ENCODE measurements at regions of chr6 and their contacts with region 1.

Region 1: DNA sequence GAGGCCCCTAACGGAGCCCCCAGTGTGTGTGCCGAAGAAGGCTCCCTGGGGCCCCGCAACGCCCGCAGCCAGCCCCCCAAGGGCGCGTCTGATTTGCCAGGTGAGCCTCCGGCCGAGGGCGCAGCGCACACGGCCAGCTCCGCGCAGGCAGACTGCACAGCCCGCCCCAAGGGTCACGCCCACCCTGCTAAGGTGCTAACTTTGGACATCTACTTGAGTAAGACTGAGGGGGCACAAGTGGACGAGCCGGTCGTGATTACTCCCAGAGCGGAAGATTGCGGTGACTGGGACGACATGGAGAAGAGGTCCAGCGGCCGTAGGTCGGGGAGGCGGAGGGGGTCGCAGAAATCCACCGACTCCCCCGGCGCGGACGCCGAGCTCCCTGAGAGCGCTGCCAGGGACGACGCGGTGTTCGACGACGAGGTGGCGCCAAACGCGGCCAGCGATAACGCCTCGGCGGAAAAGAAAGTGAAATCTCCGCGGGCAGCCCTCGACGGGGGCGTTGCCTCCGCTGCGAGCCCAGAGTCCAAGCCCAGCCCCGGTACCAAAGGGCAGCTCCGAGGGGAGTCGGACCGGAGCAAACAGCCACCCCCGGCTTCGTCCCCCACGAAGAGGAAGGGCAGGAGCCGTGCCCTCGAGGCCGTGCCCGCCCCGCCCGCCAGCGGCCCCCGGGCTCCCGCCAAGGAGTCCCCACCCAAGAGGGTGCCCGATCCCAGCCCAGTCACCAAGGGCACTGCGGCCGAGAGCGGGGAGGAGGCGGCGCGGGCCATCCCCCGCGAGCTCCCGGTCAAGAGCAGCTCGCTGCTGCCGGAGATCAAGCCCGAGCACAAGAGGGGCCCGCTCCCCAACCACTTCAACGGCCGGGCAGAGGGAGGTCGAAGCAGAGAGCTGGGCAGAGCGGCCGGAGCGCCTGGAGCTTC is 117.0 kb downstream of the RTN4IP1 start:
- DNase-seq: peak; percentile 83
- ATAC-seq: peak; percentile 62
- H3K4me3 Mint-ChIP-seq: peak overlapping the region; percentile 90
- H3K27ac Mint-ChIP-seq: peak overlapping the region; percentile 93
- H3K4me1 Mint-ChIP-seq: peaks cover 38% of the 10 kb centered on the region
- H3K27me3 Mint-ChIP-seq: no peaks in the 10 kb centered on the region
- CTCF ChIP-seq: peak; percentile 56

Region 2: DNA sequence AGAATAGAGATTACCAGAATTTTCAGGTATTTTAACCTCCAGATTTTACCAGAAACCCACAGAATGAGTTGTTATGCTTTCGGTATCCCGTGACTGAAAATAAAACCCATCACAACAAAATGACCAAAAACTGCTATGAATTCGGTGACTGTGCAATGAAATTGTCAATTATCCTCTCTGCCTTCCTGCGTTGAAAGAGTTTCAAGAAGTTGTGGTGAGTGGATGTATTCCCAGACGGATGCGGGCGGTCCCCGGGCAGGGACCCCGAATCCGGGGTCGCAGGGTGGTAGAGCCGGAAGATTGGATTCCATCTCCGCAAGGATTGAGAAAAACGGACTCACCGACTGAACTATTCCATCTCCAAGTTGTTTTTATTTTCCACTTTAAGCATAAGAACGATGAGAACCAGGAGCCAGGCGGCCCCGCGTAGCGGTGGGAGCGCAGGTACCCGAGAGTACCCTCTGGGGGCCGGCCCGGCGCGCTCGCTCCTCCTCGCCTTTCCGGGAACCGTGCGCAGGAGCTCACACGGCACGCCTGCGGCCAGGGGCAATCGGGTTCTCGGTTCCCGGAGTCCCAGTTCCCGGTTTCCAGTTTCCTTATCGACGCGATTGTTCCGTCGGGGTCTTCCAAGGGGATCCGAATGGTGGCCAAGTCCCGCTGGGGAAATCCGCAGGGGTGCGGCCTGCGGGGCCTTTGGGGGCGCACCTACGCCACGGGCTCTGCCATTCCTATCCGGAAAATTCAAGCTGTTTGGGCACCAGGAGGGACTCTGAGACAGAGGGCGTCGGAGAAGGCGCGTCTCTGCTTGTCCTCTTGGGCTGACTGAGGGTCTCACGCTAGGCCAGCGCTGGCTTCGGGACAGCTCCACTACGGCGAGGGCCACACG is 531.1 kb before region 1 on chr6:
- CTCF ChIA-PET with region 1: no interaction called
- POLR2A ChIA-PET with region 1: no interaction called
- intact Hi-C with region 1: no loop called
- DNase-seq: peak; percentile 45
- ATAC-seq: peak; percentile 47
- H3K4me3 Mint-ChIP-seq: peak overlapping the region; percentile 66
- H3K27ac Mint-ChIP-seq: peak overlapping the region; percentile 67
- H3K4me1 Mint-ChIP-seq: peaks cover 38% of the 10 kb centered on the region
- H3K27me3 Mint-ChIP-seq: peaks cover 57% of the 10 kb centered on the region
- CTCF ChIP-seq: no peak

Region 3: GRCh38 chr6:106525111-106525881 is 13.0 kb after region 1 on chr6:
- CTCF ChIA-PET with region 1: interaction called, 80 read pairs
- POLR2A ChIA-PET with region 1: interaction called, 70 read pairs
- intact Hi-C with region 1: no loop called
- DNase-seq: no peak
- ATAC-seq: peak; percentile 31
- H3K4me3 Mint-ChIP-seq: peak overlapping the region; percentile 77
- H3K27ac Mint-ChIP-seq: peak overlapping the region; percentile 90
- H3K4me1 Mint-ChIP-seq: peaks cover 70% of the 10 kb centered on the region
- H3K27me3 Mint-ChIP-seq: no peaks in the 10 kb centered on the region
- CTCF ChIP-seq: no peak

Region 4: DNA sequence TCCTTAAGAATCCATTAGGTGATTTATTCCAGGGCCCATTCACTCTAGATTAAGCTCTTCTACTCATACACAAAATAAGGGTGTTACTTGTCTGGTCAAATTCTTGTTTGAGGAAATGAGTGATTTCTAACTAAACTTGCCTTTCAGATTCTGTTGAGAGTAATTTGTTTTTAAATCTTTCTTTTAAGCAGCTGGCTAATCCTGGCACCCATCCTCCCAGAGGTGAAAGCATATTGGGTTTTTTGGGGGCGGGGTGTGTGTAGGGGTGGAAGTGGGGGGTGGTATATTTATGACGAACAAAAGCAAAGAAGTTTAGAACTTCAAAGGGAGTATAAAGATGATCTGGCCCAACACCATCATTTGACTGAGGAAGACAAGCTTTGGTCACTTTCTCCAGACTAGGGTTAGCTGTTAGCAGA is 22.3 kb after region 1 on chr6:
- CTCF ChIA-PET with region 1: interaction called, 27 read pairs
- POLR2A ChIA-PET with region 1: interaction called, 20 read pairs
- intact Hi-C with region 1: no loop called
- DNase-seq: peak; percentile 77
- ATAC-seq: peak; percentile 84
- H3K4me3 Mint-ChIP-seq: no peak overlapping the region
- H3K27ac Mint-ChIP-seq: peak overlapping the region; percentile 84
- H3K4me1 Mint-ChIP-seq: peaks cover 78% of the 10 kb centered on the region
- H3K27me3 Mint-ChIP-seq: no peaks in the 10 kb centered on the region
- CTCF ChIP-seq: no peak

Region 5: DNA sequence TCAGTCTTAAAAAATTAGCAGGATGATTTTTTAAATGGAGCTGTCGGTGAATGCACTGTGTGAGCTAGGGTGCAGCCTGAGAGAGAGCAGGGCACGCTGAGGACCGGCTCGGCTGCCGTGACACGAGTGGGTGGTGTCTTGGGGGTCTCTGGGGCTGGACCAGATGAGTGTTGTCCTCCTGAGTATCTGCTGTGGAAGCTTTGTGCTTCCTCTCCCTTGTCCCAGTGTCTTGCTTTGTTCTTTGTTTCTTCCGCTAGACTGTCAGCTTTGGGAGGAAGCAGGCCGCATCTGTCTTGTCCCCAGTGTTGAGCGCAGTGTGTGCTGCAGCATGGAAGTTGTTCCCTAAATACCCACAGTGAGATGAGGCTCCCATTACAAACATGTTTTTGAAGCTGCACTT is 27.6 kb after region 1 on chr6:
- CTCF ChIA-PET with region 1: interaction called, 27 read pairs
- POLR2A ChIA-PET with region 1: interaction called, 20 read pairs
- intact Hi-C with region 1: no loop called
- DNase-seq: no peak
- ATAC-seq: no peak
- H3K4me3 Mint-ChIP-seq: no peak overlapping the region
- H3K27ac Mint-ChIP-seq: no peak overlapping the region
- H3K4me1 Mint-ChIP-seq: peaks cover 36% of the 10 kb centered on the region
- H3K27me3 Mint-ChIP-seq: no peaks in the 10 kb centered on the region
- CTCF ChIP-seq: no peak

Region 6: DNA sequence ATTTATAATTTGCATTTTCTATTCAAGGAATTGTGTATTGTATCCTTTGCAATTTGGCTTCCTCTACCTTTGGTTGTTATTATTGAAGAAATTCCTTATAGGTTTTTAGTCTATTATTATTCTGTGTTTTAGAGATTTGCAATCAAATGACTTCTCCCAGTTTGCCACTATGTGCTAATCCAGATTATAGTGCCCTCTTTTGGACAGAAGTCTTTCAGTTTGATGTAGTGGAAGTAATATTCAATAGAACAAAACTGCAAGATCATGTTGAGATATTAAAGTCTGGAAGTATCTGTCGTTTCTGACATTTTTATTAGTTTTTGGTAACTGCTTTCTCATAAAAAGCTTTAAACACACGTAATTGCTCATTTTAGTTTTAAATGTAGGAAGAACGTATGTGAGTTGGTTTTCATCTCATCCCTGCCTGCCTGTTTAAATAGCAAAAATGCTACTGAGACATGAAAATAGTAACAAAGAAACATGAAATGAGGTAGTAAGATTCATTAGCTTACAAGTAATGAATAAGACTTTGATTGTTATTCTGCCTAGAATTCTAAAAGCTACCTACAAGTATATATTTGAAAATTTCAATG is 44.2 kb after region 1 on chr6:
- CTCF ChIA-PET with region 1: interaction called, 136 read pairs
- POLR2A ChIA-PET with region 1: interaction called, 5 read pairs
- intact Hi-C with region 1: loop called (anchors 5 kb)
- DNase-seq: no peak
- ATAC-seq: no peak
- H3K4me3 Mint-ChIP-seq: no peak overlapping the region
- H3K27ac Mint-ChIP-seq: no peak overlapping the region
- H3K4me1 Mint-ChIP-seq: peaks cover 26% of the 10 kb centered on the region
- H3K27me3 Mint-ChIP-seq: no peaks in the 10 kb centered on the region
- CTCF ChIP-seq: peak; percentile 60

Region 7: DNA sequence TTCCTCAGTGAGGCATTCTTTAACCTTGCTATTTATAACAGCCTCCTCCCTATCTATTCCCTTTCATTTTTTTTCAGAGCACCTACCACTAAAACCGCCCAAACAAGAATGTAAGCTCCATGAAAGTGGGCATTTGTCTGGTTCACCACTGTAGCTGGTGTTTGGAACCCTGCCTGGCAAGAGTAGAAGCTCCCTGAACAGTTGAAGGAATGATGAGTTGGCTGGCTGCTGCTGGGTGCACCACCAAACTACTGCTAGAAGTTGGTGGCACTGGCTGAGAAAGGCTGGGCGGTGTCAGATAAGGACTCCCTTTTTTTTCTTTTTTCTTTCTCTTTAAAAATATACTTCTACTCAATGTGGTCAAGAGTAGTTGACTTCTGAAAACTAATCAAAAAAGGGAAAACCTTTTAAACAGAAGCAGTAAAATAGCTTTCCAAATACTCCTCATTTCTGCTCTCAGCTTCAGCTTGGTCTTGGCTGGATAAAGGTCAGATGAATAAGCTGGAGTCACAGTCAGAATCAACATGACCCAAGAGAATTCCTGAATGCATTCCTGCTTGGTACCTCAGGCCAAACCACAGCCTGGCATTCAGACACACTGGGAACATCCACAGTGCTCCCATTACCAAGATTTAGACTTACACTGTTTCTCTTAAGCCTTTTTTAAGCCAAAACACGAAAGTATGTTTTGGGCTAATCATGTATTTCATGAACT is 79.0 kb after region 1 on chr6:
- CTCF ChIA-PET with region 1: no interaction called
- POLR2A ChIA-PET with region 1: no interaction called
- intact Hi-C with region 1: no loop called
- DNase-seq: no peak
- ATAC-seq: no peak
- H3K4me3 Mint-ChIP-seq: no peak overlapping the region
- H3K27ac Mint-ChIP-seq: no peak overlapping the region
- H3K4me1 Mint-ChIP-seq: no peaks in the 10 kb centered on the region
- H3K27me3 Mint-ChIP-seq: no peaks in the 10 kb centered on the region
- CTCF ChIP-seq: no peak